H1 (cell line): ENCODE measurements at regions of chr1 and their contacts with region 1.

Region 1: DNA sequence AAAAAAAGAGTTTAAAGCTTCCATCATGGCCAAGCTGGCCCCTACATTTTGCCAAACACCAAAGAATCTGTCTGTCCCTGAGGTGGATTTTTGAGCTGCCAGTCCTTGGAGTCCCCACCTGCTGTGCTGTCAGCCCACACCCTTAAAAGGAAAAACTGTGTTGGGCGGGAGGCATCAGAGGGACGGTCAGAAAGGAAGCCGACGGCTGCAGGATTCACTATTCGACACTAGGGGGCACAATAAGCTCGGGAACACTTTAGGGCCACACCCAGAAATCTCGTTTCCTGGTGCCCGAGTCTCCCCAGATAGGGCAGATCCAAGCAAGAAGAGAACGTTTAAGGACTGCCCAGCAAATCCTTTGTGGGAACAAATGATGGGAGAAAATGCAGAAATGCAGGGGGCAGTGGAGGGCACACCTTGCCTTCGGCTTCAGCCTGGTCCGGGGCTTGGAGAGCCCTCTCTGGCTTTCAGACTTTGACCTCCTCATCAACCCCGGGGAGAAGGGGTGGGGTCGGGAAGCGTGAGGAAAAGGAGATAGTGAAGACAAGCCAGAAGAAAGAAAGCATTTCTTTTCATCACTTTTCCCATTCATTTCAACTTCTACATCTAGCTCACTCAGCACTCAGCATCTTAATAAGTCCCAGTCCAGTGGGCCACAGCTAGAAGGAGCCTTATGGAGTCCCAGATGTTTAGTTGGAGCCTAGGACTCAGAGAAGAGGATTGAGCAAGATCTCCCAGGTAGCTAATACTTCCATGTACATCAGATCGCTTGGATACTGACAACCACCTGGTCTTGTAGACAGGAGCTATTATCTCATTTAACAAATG is 5.0 kb upstream of the CTTNBP2NL start:
- DNase-seq: peak; percentile 85 to 93
- H3K4me3 ChIP-seq: peak overlapping the region in 3 of 4 experiments; percentile 8 to 54 (median 15); a peak in 4 of 8 replicates
- H3K27ac ChIP-seq: no peak overlapping the region
- H3K4me1 ChIP-seq: peaks cover 2 to 14% (median 8%) of the 10 kb centered on the region in 4 experiments; a peak in 5 of 7 replicates
- H3K27me3 ChIP-seq: no peaks in the 10 kb centered on the region
- CTCF ChIP-seq: peak; percentile 72 to 97 (median 78)
- EP300 ChIP-seq: no peak
- POLR2A ChIP-seq: no peak
- RAD21 ChIP-seq: peak; percentile 92 to 94

Region 2: DNA sequence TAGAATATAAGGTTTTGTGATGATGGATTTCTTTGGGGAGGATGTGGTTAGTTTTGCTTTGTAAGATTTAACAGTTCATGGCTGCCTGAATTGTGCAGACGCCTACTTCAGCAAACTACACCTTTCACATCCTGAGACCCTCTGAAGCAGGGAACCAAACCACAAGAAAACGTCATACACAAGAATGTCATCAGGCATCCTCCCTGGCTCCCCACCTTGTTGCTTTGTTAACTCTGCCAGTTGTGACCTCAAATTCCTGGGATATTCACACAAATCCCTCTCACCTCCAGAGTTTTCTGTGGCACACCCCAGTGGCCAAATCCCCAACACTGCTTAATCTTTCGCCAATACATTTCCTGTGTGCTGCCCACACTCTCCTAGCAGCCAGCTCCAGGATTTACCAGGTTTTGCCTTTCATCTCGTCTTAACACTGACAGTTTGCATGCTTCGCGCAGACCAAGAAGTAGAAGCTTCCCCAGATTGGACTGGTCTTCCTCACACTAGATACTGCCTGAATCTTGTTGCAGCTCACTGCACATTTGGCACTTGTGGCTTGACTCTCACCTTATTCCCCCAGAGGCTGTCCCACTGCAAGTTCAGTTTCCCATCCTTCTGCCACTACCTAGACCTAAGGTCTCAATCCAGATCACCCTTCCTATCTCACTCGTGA is 46.1 kb before region 1 on chr1:
- CTCF ChIA-PET with region 1: no interaction called
- POLR2A ChIA-PET with region 1: no interaction called
- DNase-seq: no peak
- H3K4me3 ChIP-seq: no peak overlapping the region
- H3K27ac ChIP-seq: no peak overlapping the region
- H3K4me1 ChIP-seq: no peaks in the 10 kb centered on the region
- H3K27me3 ChIP-seq: no peaks in the 10 kb centered on the region
- CTCF ChIP-seq: no peak
- EP300 ChIP-seq: no peak
- POLR2A ChIP-seq: no peak
- RAD21 ChIP-seq: no peak; a peak in 1 of 4 replicates

Region 3: DNA sequence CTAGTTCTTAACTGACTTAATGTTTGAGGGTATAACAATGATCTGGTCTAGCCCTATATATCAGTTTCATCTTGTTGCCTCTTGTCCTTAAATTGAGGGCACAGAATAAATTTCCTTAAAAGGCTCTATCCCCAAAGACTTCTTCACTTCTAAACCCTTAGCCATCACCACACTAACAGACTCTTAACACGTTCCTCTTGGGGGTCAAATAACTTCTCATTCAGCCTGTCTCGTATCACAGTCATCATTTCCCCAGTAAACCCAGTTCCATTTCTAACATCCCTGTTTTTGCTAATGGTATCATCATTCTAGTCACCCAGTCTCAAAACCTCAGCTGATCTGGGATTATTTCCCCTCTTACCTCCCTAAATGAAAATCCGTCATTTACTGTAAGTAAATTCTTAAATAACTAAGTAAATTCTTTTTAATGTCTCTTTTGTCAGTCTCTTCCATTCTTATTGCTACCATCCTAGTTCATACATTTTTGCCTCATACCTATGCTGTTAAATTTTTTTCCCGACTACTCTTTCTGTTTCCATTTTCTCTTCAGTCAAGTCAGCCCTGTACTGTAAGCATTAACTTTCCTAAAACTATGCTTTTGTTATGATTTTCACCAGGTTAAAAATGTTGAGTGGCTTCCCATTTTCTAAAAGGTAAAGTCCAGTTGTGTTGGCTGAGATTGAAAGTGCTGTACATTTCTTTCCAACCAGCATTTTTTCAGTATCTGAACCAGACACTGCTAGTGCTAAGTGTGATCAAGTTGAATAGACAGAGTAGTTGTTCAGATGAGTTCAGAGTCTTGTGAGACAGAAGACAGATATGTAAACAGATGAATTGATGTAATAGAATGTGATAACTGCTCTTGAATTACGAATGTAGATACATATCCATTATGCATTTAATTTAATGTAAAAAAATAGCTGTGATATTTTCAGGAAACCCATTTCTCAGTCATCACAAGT is 12.0 kb after region 1 on chr1:
- CTCF ChIA-PET with region 1: interaction called, 15 read pairs
- POLR2A ChIA-PET with region 1: interaction called, 12 read pairs
- DNase-seq: no peak
- H3K4me3 ChIP-seq: no peak overlapping the region
- H3K27ac ChIP-seq: no peak overlapping the region
- H3K4me1 ChIP-seq: peaks cover 1 to 16% (median 10%) of the 10 kb centered on the region in 4 experiments; a peak in 6 of 7 replicates
- H3K27me3 ChIP-seq: no peaks in the 10 kb centered on the region
- CTCF ChIP-seq: no peak
- EP300 ChIP-seq: no peak
- POLR2A ChIP-seq: no peak
- RAD21 ChIP-seq: no peak

Region 4: DNA sequence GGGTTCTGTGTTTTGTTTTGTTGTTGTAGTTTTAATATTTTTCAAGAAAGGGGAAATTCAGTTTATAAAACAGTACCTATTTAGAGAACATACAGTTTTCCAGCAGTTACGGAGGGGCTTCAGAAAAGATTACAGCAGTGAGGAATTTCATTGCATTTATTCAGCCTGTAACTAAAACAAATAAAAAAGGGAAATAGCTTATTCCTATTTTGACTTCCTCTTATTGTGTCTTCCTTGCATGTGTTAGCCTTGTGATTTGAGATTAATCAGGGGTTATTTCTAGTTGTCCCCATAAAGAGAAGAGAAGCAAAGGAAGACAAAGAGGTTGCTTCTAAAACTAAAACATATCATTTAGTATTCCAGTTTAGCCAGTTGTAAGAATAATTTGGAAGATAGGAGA is 40.0 kb after region 1 on chr1:
- CTCF ChIA-PET with region 1: interaction called, 15 read pairs
- POLR2A ChIA-PET with region 1: no interaction called
- DNase-seq: no peak
- H3K4me3 ChIP-seq: no peak overlapping the region
- H3K27ac ChIP-seq: no peak overlapping the region
- H3K4me1 ChIP-seq: no peaks in the 10 kb centered on the region
- H3K27me3 ChIP-seq: no peaks in the 10 kb centered on the region
- CTCF ChIP-seq: no peak
- EP300 ChIP-seq: no peak
- POLR2A ChIP-seq: no peak
- RAD21 ChIP-seq: no peak

Region 5: DNA sequence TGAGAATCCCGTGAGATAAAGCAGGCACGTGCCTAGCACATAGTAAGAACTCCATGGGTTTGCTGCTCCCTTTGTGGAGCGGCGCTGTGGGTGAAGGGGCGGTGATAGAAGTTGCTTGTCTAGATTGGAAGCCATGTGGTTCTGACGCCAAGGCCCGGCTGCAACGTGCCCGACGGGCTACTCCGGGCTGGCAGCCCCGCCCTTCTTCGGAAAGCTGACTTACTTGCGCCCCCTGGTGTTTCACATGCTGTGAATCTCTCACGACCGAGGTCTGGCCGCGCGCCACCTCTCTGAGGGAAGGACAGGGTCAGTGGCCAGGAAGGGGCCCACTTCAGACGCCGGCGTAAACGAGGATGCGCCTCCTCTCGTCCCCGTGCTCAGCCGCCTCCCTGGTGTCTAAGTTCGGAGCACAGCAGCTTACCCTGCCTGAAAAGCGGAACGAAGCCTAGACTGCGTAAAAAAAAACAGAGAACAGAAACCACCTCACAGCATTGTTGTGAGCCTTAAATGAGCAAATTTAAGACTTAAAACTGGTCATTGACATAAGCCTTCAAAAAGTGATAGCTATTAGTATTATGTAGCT is 75.2 kb after region 1 on chr1:
- CTCF ChIA-PET with region 1: interaction called, 80 read pairs
- POLR2A ChIA-PET with region 1: interaction called, 12 read pairs
- DNase-seq: peak; percentile 83 to 98
- H3K4me3 ChIP-seq: peak overlapping the region in 2 of 4 experiments; percentile 10 to 37; a peak in 3 of 8 replicates
- H3K27ac ChIP-seq: no peak overlapping the region
- H3K4me1 ChIP-seq: peaks cover 1 to 9% (median 5%) of the 10 kb centered on the region in 4 experiments; a peak in 5 of 7 replicates
- H3K27me3 ChIP-seq: peaks cover 0 to 12% (median 3%) of the 10 kb centered on the region in 4 experiments; a peak in 4 of 7 replicates
- CTCF ChIP-seq: peak; percentile 71 to 93 (median 89)
- EP300 ChIP-seq: 0 out of 3 replicates have a peak, but pooled peaks of 1 of the 2 experiments have one; percentile 19
- POLR2A ChIP-seq: peak in 1 of 2 experiments; percentile 60; a peak in 2 of 3 replicates
- RAD21 ChIP-seq: peak; percentile 69 to 78

Region 6: GRCh38 chr1:112614460-112615065 is 223.6 kb after region 1 on chr1:
- CTCF ChIA-PET with region 1: interaction called, 13 read pairs
- POLR2A ChIA-PET with region 1: interaction called, 6 read pairs
- DNase-seq: no peak
- H3K4me3 ChIP-seq: no peak overlapping the region
- H3K27ac ChIP-seq: no peak overlapping the region
- H3K4me1 ChIP-seq: no peaks in the 10 kb centered on the region; a peak in 1 of 7 replicates
- H3K27me3 ChIP-seq: no peaks in the 10 kb centered on the region
- CTCF ChIP-seq: peak; percentile 17 to 41 (median 31); a peak in 3 of 4 replicates
- EP300 ChIP-seq: no peak
- POLR2A ChIP-seq: no peak
- RAD21 ChIP-seq: peak; percentile 63 to 69